ENCODE measurements at regions of chr3 and their contacts with region 1.

Region 1: GRCh38 chr3:172595641-172596393 is 72.6 kb upstream of the TNFSF10 start:
- DNase-seq: peak; percentile 32 to 61 (median 42)
- ATAC-seq: peak; percentile 84
- H3K4me3 ChIP-seq: no peak overlapping the region
- H3K27ac ChIP-seq: no peak overlapping the region
- H3K4me1 ChIP-seq: peaks cover 14 to 23% of the 10 kb centered on the region in 2 experiments; a peak in 4 of 5 replicates
- H3K27me3 ChIP-seq: no peaks in the 10 kb centered on the region
- CTCF ChIP-seq: peak; percentile 75 to 94 (median 82)
- EP300 ChIP-seq: no peak
- POLR2A ChIP-seq: no peak
- RAD21 ChIP-seq: peak; percentile 95 to 96

Region 2: DNA sequence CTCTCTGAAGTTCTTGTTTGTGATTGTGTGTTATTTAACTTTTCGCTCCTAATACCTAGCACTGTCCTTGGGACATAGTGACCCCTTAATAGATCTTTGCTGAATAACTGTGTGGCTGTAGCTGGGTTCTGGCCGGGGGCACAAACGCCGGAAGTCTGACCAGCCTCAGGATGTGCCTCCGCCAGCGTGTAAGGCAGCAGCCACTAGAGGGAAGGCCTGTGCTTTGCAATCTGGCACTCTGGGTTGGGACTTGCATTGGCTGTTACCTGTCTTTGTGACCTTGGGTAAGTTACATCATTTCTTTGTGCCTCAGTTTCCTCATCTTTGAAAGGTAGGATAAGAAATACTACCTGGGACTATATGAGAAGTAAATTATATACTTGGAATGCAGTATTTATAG is 306.2 kb before region 1 on chr3:
- CTCF ChIA-PET with region 1: no interaction called
- POLR2A ChIA-PET with region 1: no interaction called
- in situ Hi-C with region 1: no loop called
- intact Hi-C with region 1: no loop called
- DNase-seq: no peak
- ATAC-seq: peak; percentile 75
- H3K4me3 ChIP-seq: no peak overlapping the region
- H3K27ac ChIP-seq: no peak overlapping the region
- H3K4me1 ChIP-seq: no peaks in the 10 kb centered on the region; a peak in 1 of 5 replicates
- H3K27me3 ChIP-seq: no peaks in the 10 kb centered on the region
- CTCF ChIP-seq: peak; percentile 30 to 39 (median 39); a peak in 3 of 6 replicates
- EP300 ChIP-seq: no peak
- POLR2A ChIP-seq: no peak
- RAD21 ChIP-seq: peak in 1 of 2 experiments; percentile 21; a peak in 1 of 4 replicates

Region 3: DNA sequence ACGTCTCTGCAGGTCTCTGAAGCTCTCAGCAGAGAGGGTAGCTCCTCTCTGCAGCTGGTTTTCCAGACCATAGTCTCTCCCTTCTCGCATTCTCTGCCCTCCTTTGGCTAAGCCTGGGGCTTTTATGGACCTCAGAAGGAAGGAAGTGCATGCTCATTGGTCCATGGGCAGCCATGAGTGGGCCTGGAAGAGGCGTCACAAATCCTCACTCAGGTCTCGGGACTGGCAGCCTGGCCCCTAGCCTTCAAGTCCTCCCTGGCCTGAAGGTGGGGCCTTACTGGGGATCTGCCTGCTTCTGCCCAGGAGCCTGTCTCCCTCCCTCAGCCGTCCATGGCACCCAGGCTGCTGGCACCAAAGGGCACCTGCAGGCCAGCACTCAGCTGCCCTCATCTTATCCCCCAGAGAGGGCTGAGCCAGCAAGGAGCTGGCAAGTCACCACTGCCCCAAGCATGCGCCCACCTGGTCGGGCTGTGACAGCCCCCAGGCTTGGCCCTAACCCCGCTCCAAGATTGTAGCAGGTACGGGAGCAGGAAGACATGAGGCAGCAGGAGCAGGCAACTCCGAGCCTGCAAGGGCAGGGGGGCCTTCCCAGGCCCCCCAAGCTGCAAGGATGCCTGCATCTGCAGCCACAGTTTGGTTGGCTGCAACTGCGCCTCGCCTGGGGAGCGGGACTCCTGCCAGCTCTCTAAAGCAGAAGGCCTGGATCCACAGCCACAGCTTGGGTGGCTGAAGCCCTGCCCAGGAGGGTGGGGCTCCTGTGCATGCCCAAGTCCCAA is 184.9 kb before region 1 on chr3:
- CTCF ChIA-PET with region 1: no interaction called
- POLR2A ChIA-PET with region 1: no interaction called
- in situ Hi-C with region 1: no loop called
- intact Hi-C with region 1: loop called (anchors 5 kb)
- DNase-seq: no peak
- ATAC-seq: peak; percentile 45; the same call in 1 of the 3 replicates
- H3K4me3 ChIP-seq: no peak overlapping the region
- H3K27ac ChIP-seq: no peak overlapping the region
- H3K4me1 ChIP-seq: peaks cover 0 to 8% of the 10 kb centered on the region in 2 experiments; a peak in 1 of 5 replicates
- H3K27me3 ChIP-seq: peaks cover 8 to 17% of the 10 kb centered on the region in 2 experiments; a peak in 4 of 5 replicates
- CTCF ChIP-seq: no peak
- EP300 ChIP-seq: no peak
- POLR2A ChIP-seq: no peak
- RAD21 ChIP-seq: no peak

Region 4: DNA sequence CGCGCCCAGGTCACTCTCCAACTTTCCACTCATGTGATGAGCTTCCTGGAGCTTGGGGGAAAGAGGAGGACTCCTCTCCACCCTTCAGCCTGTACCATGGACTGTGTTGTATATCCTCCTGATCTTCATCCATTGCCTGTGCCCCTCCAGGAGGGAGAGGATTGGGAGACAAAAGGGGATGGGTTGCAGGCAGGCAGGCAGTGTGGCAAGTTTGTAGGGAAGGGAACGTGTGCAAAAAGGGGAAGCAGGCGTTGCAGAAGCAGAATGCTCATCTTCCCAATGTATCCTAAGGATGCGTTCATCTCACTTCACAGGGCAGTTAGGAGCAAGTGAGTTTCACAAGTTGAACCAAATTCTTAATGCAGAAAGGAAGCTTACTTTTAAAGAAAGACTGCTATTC is 119.5 kb before region 1 on chr3:
- CTCF ChIA-PET with region 1: no interaction called
- POLR2A ChIA-PET with region 1: no interaction called
- in situ Hi-C with region 1: loop called (anchors 5 kb)
- intact Hi-C with region 1: no loop called
- DNase-seq: no peak
- ATAC-seq: peak; percentile 41
- H3K4me3 ChIP-seq: no peak overlapping the region
- H3K27ac ChIP-seq: no peak overlapping the region
- H3K4me1 ChIP-seq: no peaks in the 10 kb centered on the region
- H3K27me3 ChIP-seq: no peaks in the 10 kb centered on the region
- CTCF ChIP-seq: no peak
- EP300 ChIP-seq: no peak
- POLR2A ChIP-seq: no peak
- RAD21 ChIP-seq: no peak

Region 5: DNA sequence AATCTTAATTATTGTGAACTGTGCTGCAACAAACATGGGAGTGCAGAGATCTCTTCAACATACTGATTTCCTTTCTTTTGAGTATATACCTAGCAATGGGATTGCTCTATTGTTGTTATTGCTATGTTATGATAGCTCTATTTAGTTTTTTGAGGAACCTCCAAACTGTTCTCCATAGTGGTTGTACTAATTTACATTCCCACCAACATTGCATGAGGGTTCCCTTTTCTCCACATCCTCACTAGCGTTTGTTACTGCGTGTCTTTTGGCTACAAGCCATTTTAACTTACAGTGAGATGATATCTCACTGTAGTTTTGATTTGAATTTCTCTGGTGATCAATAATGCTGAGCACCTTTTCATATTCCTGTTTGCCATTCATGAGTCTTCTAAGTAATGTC is 27.1 kb before region 1 on chr3:
- CTCF ChIA-PET with region 1: no interaction called
- POLR2A ChIA-PET with region 1: no interaction called
- in situ Hi-C with region 1: no loop called
- intact Hi-C with region 1: no loop called
- DNase-seq: no peak
- ATAC-seq: no peak
- H3K4me3 ChIP-seq: no peak overlapping the region
- H3K27ac ChIP-seq: no peak overlapping the region
- H3K4me1 ChIP-seq: no peaks in the 10 kb centered on the region; a peak in 1 of 5 replicates
- H3K27me3 ChIP-seq: no peaks in the 10 kb centered on the region
- CTCF ChIP-seq: no peak
- EP300 ChIP-seq: no peak
- POLR2A ChIP-seq: no peak
- RAD21 ChIP-seq: no peak

Region 6: GRCh38 chr3:172666873-172667694 is 71.3 kb after region 1 on chr3:
- CTCF ChIA-PET with region 1: no interaction called
- POLR2A ChIA-PET with region 1: no interaction called
- in situ Hi-C with region 1: no loop called
- intact Hi-C with region 1: loop called (anchors 2 kb)
- DNase-seq: peak; percentile 62 to 81 (median 65)
- ATAC-seq: peak; percentile 100
- H3K4me3 ChIP-seq: no peak overlapping the region
- H3K27ac ChIP-seq: no peak overlapping the region
- H3K4me1 ChIP-seq: no peaks in the 10 kb centered on the region
- H3K27me3 ChIP-seq: no peaks in the 10 kb centered on the region
- CTCF ChIP-seq: peak; percentile 84 to 94 (median 87)
- EP300 ChIP-seq: no peak
- POLR2A ChIP-seq: no peak
- RAD21 ChIP-seq: peak; percentile 80 to 86